ENCODE measurements at regions of chr9 and their contacts with region 1.

Region 1: GRCh38 chr9:99819856-99820684 is 1.6 kb upstream of the NR4A3 start:
- DNase-seq: peak; percentile 93
- H3K4me3 ChIP-seq: peak overlapping the region; percentile 47 to 82 (median 78)
- H3K27ac ChIP-seq: peak overlapping the region; percentile 75
- H3K4me1 ChIP-seq: peaks cover 25% of the 10 kb centered on the region
- H3K27me3 ChIP-seq: peaks cover 8% of the 10 kb centered on the region in 2 experiments
- CTCF ChIP-seq: peak; percentile 4 to 9
- POLR2A ChIP-seq: no peak

Region 2: GRCh38 chr9:99104459-99105151 is 715.5 kb before region 1 on chr9 and contains the start of gene TGFBR1:
- CTCF ChIA-PET with region 1: no interaction called
- POLR2A ChIA-PET with region 1: no interaction called
- dilution Hi-C with region 1: no loop called
- intact Hi-C with region 1: loop called (anchors 2 kb)
- DNase-seq: peak; percentile 92
- H3K4me3 ChIP-seq: peak within 1 kb of the TSS; percentile 42 to 84 (median 57)
- H3K27ac ChIP-seq: peak within 1 kb of the TSS; percentile 38
- H3K4me1 ChIP-seq: peaks cover 13% of the 10 kb centered on the region
- H3K27me3 ChIP-seq: no peaks in the 10 kb centered on the region
- CTCF ChIP-seq: no peak
- POLR2A ChIP-seq: no peak
- total RNA-seq, gene TGFBR1: 17.7 and 18.6 TPM in 2 replicates

Region 3: DNA sequence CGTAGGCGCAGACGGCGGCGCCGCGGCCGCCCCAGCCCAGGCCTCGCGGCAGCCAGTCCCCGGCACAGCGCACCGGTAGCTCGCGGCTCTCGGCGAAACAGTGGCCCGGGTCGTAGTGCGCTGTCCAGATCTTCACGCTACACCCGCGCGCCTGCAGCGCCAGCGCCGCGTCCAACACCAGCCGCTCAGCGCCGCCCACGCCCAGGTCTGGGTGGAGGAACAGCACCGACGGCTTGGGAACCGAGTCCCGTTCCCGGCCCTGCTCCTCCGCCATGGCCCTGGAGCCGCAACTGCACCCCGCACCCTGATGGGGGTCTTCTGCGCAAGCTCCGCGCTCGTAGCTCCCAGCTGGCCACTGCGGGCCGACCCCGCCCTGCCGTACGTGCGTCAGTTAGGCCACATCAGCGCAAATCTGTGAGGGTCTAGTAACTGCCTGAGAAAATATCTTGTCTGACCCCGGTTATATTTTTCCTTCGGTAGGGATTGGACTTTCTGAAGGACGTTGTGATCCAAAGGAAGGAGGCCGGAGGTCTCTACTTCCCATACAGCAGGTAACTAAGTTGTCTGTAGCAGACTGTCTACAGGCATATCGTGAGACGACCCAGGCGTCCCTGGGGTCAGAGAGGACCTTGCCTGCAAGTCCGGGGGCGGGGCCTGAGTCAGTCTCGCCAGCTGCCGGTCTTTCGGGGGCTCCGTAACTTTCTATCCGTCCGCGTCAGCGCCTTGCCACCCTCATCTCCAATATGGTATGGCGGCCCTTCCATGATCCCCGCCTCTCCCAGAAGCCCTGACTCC is 598.3 kb before region 1 on chr9 and contains the starts of genes ALG2 and SEC61B:
- CTCF ChIA-PET with region 1: no interaction called
- POLR2A ChIA-PET with region 1: interaction called, 4 read pairs
- dilution Hi-C with region 1: no loop called
- intact Hi-C with region 1: loop called (anchors 1 kb)
- DNase-seq: peak; percentile 97
- H3K4me3 ChIP-seq: peak within 1 kb of the TSS; percentile 55 to 98 (median 91)
- H3K27ac ChIP-seq: peak within 1 kb of the TSS; percentile 99
- H3K4me1 ChIP-seq: peaks cover 28% of the 10 kb centered on the region
- H3K27me3 ChIP-seq: no peaks in the 10 kb centered on the region
- CTCF ChIP-seq: no peak
- POLR2A ChIP-seq: peak; percentile 93
- total RNA-seq, gene ALG2: 31.4 and 32.4 TPM in 2 replicates
- total RNA-seq, gene SEC61B: 241 and 242 TPM in 2 replicates

Region 4: GRCh38 chr9:99433555-99433954 is 386.5 kb before region 1 on chr9:
- CTCF ChIA-PET with region 1: no interaction called
- POLR2A ChIA-PET with region 1: no interaction called
- dilution Hi-C with region 1: no loop called
- intact Hi-C with region 1: loop called (anchors 5 kb)
- DNase-seq: peak; percentile 80
- H3K4me3 ChIP-seq: no peak overlapping the region
- H3K27ac ChIP-seq: peak overlapping the region; percentile 84
- H3K4me1 ChIP-seq: peaks cover 30% of the 10 kb centered on the region
- H3K27me3 ChIP-seq: no peaks in the 10 kb centered on the region
- CTCF ChIP-seq: no peak
- POLR2A ChIP-seq: no peak

Region 5: DNA sequence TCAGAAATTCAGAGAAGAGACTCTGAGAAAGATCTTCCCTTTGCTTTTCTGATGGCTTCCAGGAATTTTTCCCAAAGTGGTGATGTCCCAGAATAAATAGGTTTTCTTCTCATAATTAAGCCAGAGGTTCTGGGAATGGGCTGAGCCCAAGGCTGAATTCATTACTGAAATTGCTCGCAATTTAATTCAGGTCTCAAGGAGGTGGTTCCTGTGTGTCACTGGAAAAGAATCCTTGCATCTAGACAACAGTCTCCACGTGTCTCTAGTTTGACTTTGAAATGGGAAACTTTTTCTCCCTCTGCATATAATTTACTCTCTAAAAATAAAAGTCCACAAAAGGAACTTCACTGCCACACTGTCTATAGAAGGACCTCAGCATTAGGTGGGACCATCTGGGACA is 58.6 kb after region 1 on chr9:
- CTCF ChIA-PET with region 1: no interaction called
- POLR2A ChIA-PET with region 1: no interaction called
- dilution Hi-C with region 1: no loop called
- intact Hi-C with region 1: no loop called
- DNase-seq: no peak
- H3K4me3 ChIP-seq: no peak overlapping the region
- H3K27ac ChIP-seq: no peak overlapping the region
- H3K4me1 ChIP-seq: no peaks in the 10 kb centered on the region
- H3K27me3 ChIP-seq: no peaks in the 10 kb centered on the region
- CTCF ChIP-seq: no peak
- POLR2A ChIP-seq: no peak

Region 6: GRCh38 chr9:99896119-99896518 is 76.0 kb after region 1 on chr9:
- CTCF ChIA-PET with region 1: no interaction called
- POLR2A ChIA-PET with region 1: no interaction called
- dilution Hi-C with region 1: no loop called
- intact Hi-C with region 1: no loop called
- DNase-seq: no peak
- H3K4me3 ChIP-seq: no peak overlapping the region
- H3K27ac ChIP-seq: no peak overlapping the region
- H3K4me1 ChIP-seq: no peaks in the 10 kb centered on the region
- H3K27me3 ChIP-seq: peaks cover 4 to 20% of the 10 kb centered on the region in 2 experiments
- CTCF ChIP-seq: no peak
- POLR2A ChIP-seq: no peak

Region 7: GRCh38 chr9:99948896-99949295 is 128.8 kb after region 1 on chr9:
- CTCF ChIA-PET with region 1: no interaction called
- POLR2A ChIA-PET with region 1: no interaction called
- dilution Hi-C with region 1: no loop called
- intact Hi-C with region 1: loop called (anchors 5 kb)
- DNase-seq: peak; percentile 92
- H3K4me3 ChIP-seq: no peak overlapping the region
- H3K27ac ChIP-seq: peak overlapping the region; percentile 55
- H3K4me1 ChIP-seq: peaks cover 7% of the 10 kb centered on the region
- H3K27me3 ChIP-seq: no peaks in the 10 kb centered on the region
- CTCF ChIP-seq: no peak
- POLR2A ChIP-seq: no peak

Region 8: GRCh38 chr9:100206899-100207298 is 386.8 kb after region 1 on chr9:
- CTCF ChIA-PET with region 1: no interaction called
- POLR2A ChIA-PET with region 1: no interaction called
- dilution Hi-C with region 1: no loop called
- intact Hi-C with region 1: loop called (anchors 2 kb)
- DNase-seq: peak; percentile 81
- H3K4me3 ChIP-seq: peak overlapping the region in 1 of 3 experiments; percentile 32
- H3K27ac ChIP-seq: peak overlapping the region; percentile 41
- H3K4me1 ChIP-seq: peaks cover 24% of the 10 kb centered on the region
- H3K27me3 ChIP-seq: no peaks in the 10 kb centered on the region
- CTCF ChIP-seq: no peak
- POLR2A ChIP-seq: no peak

Region 9: GRCh38 chr9:101398068-101398929 is 1578.2 kb after region 1 on chr9 and contains the starts of genes MRPL50 and ZNF189:
- CTCF ChIA-PET with region 1: no interaction called
- POLR2A ChIA-PET with region 1: no interaction called
- dilution Hi-C with region 1: no loop called
- intact Hi-C with region 1: loop called (anchors 2 kb)
- DNase-seq: peak; percentile 99
- H3K4me3 ChIP-seq: peak within 1 kb of the TSS; percentile 66 to 97 (median 92)
- H3K27ac ChIP-seq: peak within 1 kb of the TSS; percentile 87
- H3K4me1 ChIP-seq: peaks cover 26% of the 10 kb centered on the region
- H3K27me3 ChIP-seq: no peaks in the 10 kb centered on the region
- CTCF ChIP-seq: no peak
- POLR2A ChIP-seq: peak; percentile 78
- total RNA-seq, gene MRPL50: 8.6 and 9.7 TPM in 2 replicates
- total RNA-seq, gene ZNF189: 14.4 and 14.6 TPM in 2 replicates

Measured in endothelial cell of umbilical vein (primary cell).